Caco-2 (cell line): ENCODE measurements at regions of chr17 and their contacts with region 1.

Region 1: DNA sequence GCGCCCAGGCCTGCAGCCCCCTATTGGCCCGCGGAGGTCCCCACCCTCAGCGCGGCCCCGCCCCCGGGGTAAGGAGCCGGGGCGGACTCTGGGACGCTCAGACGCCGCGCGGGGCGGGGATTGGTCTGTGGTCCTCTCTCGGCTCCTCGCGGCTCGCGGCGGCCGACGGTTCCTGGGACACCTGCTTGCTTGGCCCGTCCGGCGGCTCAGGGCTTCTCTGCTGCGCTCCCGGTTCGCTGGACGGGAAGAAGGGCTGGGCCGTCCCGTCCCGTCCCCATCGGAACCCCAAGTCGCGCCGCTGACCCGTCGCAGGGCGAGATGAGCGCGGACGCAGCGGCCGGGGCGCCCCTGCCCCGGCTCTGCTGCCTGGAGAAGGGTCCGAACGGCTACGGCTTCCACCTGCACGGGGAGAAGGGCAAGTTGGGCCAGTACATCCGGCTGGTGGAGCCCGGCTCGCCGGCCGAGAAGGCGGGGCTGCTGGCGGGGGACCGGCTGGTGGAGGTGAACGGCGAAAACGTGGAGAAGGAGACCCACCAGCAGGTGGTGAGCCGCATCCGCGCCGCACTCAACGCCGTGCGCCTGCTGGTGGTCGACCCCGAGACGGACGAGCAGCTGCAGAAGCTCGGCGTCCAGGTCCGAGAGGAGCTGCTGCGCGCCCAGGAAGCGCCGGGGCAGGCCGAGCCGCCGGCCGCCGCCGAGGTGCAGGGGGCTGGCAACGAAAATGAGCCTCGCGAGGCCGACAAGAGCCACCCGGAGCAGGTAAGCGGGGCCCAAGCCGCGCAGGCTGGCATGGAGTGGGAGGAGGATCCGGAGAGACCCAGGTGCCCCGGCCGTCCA is at the start of gene NHERF1:
- DNase-seq: peak; percentile 93 to 99
- H3K4me3 ChIP-seq: peak within 1 kb of the TSS; percentile 99
- H3K4me3 Mint-ChIP-seq: peak within 1 kb of the TSS; percentile 98
- H3K27ac Mint-ChIP-seq: peak within 1 kb of the TSS; percentile 87
- H3K4me1 ChIP-seq: peaks cover 65% of the 10 kb centered on the region
- H3K4me1 Mint-ChIP-seq: peaks cover 55% of the 10 kb centered on the region
- H3K27me3 ChIP-seq: no peaks in the 10 kb centered on the region
- H3K27me3 Mint-ChIP-seq: no peaks in the 10 kb centered on the region
- CTCF ChIP-seq: peak in 1 of 2 experiments; percentile 55
- total RNA-seq, gene NHERF1: 204 and 218 TPM in 2 replicates

Region 2: GRCh38 chr17:74712756-74713155 is 36.0 kb before region 1 on chr17 and contains the start of gene CD300LF:
- CTCF ChIA-PET with region 1: interaction called, 3 read pairs
- POLR2A ChIA-PET with region 1: no interaction called
- intact Hi-C with region 1: loop called (anchors 1 kb)
- DNase-seq: no peak
- H3K4me3 ChIP-seq: no peak within 1 kb of the TSS
- H3K4me3 Mint-ChIP-seq: no peak within 1 kb of the TSS
- H3K27ac Mint-ChIP-seq: peak within 1 kb of the TSS; percentile 56
- H3K4me1 ChIP-seq: peaks cover 29% of the 10 kb centered on the region
- H3K4me1 Mint-ChIP-seq: peaks cover 17% of the 10 kb centered on the region
- H3K27me3 ChIP-seq: no peaks in the 10 kb centered on the region
- H3K27me3 Mint-ChIP-seq: no peaks in the 10 kb centered on the region
- CTCF ChIP-seq: no peak
- total RNA-seq, gene CD300LF: 2.2 and 2.4 TPM in 2 replicates

Region 3: DNA sequence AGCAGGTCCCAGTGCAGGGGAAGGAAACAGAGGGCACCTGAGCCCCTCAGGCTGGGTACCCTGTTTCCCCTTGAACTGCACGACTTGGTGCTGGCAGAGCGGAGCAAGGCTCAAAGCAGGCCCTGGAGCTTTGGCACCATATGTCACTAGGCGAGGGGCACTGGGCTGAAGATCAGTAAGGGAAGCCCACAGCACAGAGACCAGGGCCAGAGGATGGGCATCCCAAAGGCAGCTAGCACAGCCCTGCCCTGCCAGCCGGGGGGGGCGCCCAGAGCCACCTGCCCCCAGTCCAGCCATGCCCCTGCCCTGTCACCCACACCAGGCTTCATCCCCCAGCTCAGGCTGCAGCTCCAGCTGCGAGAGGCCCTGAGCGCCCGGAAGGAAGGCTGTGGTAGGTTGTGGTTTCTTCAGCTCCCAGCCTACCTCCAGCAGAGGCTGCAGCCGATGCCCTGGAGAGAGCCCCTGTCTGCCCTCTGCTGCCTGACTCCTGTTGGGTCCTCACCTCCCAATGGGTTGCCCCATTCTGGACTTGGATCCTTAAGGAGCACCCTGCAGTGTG is 10.6 kb after region 1 on chr17:
- CTCF ChIA-PET with region 1: interaction called, 102 read pairs
- POLR2A ChIA-PET with region 1: interaction called, 40 read pairs
- intact Hi-C with region 1: loop called (anchors 1 kb)
- DNase-seq: peak; percentile 71 to 73
- H3K4me3 ChIP-seq: no peak overlapping the region
- H3K4me3 Mint-ChIP-seq: peak overlapping the region; percentile 69
- H3K27ac Mint-ChIP-seq: peak overlapping the region; percentile 94
- H3K4me1 ChIP-seq: peaks cover 73% of the 10 kb centered on the region
- H3K4me1 Mint-ChIP-seq: peaks cover 41% of the 10 kb centered on the region
- H3K27me3 ChIP-seq: no peaks in the 10 kb centered on the region
- H3K27me3 Mint-ChIP-seq: no peaks in the 10 kb centered on the region
- CTCF ChIP-seq: peak in 1 of 2 experiments; percentile 30

Region 4: GRCh38 chr17:74776044-74776977 is 27.6 kb after region 1 on chr17 and contains the start of gene NAT9:
- CTCF ChIA-PET with region 1: interaction called, 76 read pairs
- POLR2A ChIA-PET with region 1: interaction called, 17 read pairs
- intact Hi-C with region 1: loop called (anchors 1 kb)
- DNase-seq: peak; percentile 97 to 100
- H3K4me3 ChIP-seq: peak within 1 kb of the TSS; percentile 80
- H3K4me3 Mint-ChIP-seq: peak within 1 kb of the TSS; percentile 97
- H3K27ac Mint-ChIP-seq: peak within 1 kb of the TSS; percentile 95
- H3K4me1 ChIP-seq: peaks cover 27% of the 10 kb centered on the region
- H3K4me1 Mint-ChIP-seq: peaks cover 22% of the 10 kb centered on the region
- H3K27me3 ChIP-seq: no peaks in the 10 kb centered on the region
- H3K27me3 Mint-ChIP-seq: no peaks in the 10 kb centered on the region
- CTCF ChIP-seq: no peak
- total RNA-seq, gene NAT9: 84.5 and 89.5 TPM in 2 replicates

Region 5: GRCh38 chr17:74852237-74853047 is 103.7 kb after region 1 on chr17:
- CTCF ChIA-PET with region 1: interaction called, 6 read pairs
- POLR2A ChIA-PET with region 1: interaction called, 10 read pairs
- intact Hi-C with region 1: no loop called
- DNase-seq: peak; percentile 93 to 94
- H3K4me3 ChIP-seq: peak overlapping the region; percentile 62
- H3K4me3 Mint-ChIP-seq: peak overlapping the region; percentile 82
- H3K27ac Mint-ChIP-seq: peak overlapping the region; percentile 63
- H3K4me1 ChIP-seq: peaks cover 8% of the 10 kb centered on the region
- H3K4me1 Mint-ChIP-seq: peaks cover 7% of the 10 kb centered on the region
- H3K27me3 ChIP-seq: 0 out of 2 replicates have a peak, but pooled peaks cover 2% of the 10 kb centered on the region
- H3K27me3 Mint-ChIP-seq: peaks cover 16% of the 10 kb centered on the region
- CTCF ChIP-seq: no peak

Region 6: GRCh38 chr17:74873038-74873873 is 124.5 kb after region 1 on chr17:
- CTCF ChIA-PET with region 1: interaction called, 4 read pairs
- POLR2A ChIA-PET with region 1: interaction called, 10 read pairs
- intact Hi-C with region 1: no loop called
- DNase-seq: peak; percentile 99 to 100
- H3K4me3 ChIP-seq: peak overlapping the region; percentile 83
- H3K4me3 Mint-ChIP-seq: peak overlapping the region; percentile 84
- H3K27ac Mint-ChIP-seq: peak overlapping the region; percentile 55
- H3K4me1 ChIP-seq: peaks cover 12% of the 10 kb centered on the region
- H3K4me1 Mint-ChIP-seq: peaks cover 21% of the 10 kb centered on the region
- H3K27me3 ChIP-seq: no peaks in the 10 kb centered on the region
- H3K27me3 Mint-ChIP-seq: no peaks in the 10 kb centered on the region
- CTCF ChIP-seq: no peak

Region 7: DNA sequence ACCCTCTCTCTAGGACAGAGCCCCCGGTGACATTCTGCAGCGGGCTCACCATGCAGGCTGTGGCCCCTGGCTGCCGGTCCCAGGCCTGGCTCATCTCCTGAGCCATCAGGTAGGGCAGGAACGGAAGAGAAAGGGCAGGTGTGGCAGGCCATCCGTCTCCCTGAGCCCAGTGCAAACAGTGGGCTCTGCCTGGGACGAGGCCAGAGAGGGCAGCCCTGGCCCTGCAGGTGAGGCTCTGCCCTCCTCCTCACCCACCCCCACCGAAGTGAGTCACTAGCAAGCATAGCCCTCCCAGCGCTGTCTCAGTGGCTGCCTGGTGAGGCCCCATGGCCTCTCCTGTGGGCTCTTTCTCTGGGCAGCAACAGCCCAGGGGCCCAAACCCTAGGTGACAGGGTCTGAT is 201.5 kb after region 1 on chr17:
- CTCF ChIA-PET with region 1: no interaction called
- POLR2A ChIA-PET with region 1: no interaction called
- intact Hi-C with region 1: loop called (anchors 5 kb)
- DNase-seq: peak; percentile 28 to 49
- H3K4me3 ChIP-seq: no peak overlapping the region
- H3K4me3 Mint-ChIP-seq: no peak overlapping the region
- H3K27ac Mint-ChIP-seq: no peak overlapping the region
- H3K4me1 ChIP-seq: peaks cover 8% of the 10 kb centered on the region
- H3K4me1 Mint-ChIP-seq: peaks cover 7% of the 10 kb centered on the region
- H3K27me3 ChIP-seq: no peaks in the 10 kb centered on the region
- H3K27me3 Mint-ChIP-seq: peaks cover 2% of the 10 kb centered on the region
- CTCF ChIP-seq: no peak